K562 (cell line): ENCODE measurements at regions of chr3 and their contacts with region 1.

Region 1: DNA sequence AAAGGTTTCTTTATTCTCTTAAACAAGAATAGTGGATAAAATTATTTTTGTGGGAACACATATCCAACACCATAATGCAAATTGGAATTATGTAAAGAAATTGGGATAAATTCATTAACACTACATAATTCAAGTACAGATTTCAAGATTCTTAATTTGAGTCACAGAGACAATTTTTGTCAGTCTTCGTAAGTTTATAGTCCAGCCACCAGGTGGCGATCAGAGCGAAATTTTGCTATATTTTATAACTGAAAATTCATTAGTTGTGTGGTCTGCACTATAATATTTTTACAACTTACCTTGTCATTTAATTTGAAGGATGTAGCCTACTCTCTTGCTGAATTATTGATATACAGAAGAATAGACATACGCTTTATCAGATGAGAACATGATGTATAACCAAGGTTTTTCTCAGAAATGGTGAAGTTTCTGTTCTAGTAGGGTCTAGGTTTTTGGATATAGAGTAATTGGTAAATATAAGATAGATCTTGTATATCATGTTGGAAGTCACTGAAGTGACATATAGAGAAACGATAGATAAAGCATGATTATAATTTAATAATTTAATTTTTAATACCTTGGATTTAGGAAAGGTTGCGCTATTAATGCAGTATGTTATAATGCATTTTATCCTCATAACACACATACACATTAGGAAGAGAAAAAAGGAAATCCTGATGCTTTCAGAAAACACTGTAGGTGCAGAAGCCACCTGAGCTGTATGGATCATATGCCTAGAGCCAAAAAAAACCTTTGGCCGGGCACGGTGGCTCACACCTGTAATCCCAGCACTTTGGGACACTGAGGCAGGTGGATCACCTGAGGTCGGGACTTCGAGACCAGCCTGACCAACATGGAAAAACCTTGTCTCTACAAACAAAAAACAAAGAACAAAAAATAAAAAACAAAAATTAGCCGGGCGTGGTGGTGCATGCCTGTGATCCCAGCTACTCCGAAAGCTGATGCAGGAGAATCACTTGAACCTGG is 31.7 kb downstream of the PLSCR4 start:
- DNase-seq: peak; percentile 8 to 32 (median 15)
- ATAC-seq: no peak
- H3K4me3 ChIP-seq: no peak overlapping the region
- H3K27ac ChIP-seq: no peak overlapping the region
- H3K4me1 ChIP-seq: no peaks in the 10 kb centered on the region
- H3K27me3 ChIP-seq: no peaks in the 10 kb centered on the region
- CTCF ChIP-seq: peak; percentile 40 to 64 (median 49); a peak in 4 of 6 replicates
- EP300 ChIP-seq: no peak
- POLR2A ChIP-seq: no peak
- RAD21 ChIP-seq: peak; percentile 67 to 73

Region 2: GRCh38 chr3:146589899-146590508 is 370.8 kb after region 1 on chr3:
- CTCF ChIA-PET with region 1: no interaction called
- POLR2A ChIA-PET with region 1: no interaction called
- in situ Hi-C with region 1: loop called (anchors 5 kb)
- intact Hi-C with region 1: no loop called
- DNase-seq: peak; percentile 13 to 46 (median 26)
- ATAC-seq: 0 out of 3 replicates have a peak, but pooled peaks have one; percentile 51
- H3K4me3 ChIP-seq: no peak overlapping the region
- H3K27ac ChIP-seq: no peak overlapping the region
- H3K4me1 ChIP-seq: no peaks in the 10 kb centered on the region
- H3K27me3 ChIP-seq: no peaks in the 10 kb centered on the region
- CTCF ChIP-seq: peak in 2 of 3 experiments; percentile 40 to 60; a peak in 3 of 6 replicates
- EP300 ChIP-seq: no peak
- POLR2A ChIP-seq: no peak
- RAD21 ChIP-seq: peak; percentile 61